Activated CD4-positive, alpha-beta memory T cell treated with anti-CD3 and anti-CD28 coated beads for 36 hours (primary cell): ENCODE measurements at regions of chr5 and their contacts with region 1.

Region 1: DNA sequence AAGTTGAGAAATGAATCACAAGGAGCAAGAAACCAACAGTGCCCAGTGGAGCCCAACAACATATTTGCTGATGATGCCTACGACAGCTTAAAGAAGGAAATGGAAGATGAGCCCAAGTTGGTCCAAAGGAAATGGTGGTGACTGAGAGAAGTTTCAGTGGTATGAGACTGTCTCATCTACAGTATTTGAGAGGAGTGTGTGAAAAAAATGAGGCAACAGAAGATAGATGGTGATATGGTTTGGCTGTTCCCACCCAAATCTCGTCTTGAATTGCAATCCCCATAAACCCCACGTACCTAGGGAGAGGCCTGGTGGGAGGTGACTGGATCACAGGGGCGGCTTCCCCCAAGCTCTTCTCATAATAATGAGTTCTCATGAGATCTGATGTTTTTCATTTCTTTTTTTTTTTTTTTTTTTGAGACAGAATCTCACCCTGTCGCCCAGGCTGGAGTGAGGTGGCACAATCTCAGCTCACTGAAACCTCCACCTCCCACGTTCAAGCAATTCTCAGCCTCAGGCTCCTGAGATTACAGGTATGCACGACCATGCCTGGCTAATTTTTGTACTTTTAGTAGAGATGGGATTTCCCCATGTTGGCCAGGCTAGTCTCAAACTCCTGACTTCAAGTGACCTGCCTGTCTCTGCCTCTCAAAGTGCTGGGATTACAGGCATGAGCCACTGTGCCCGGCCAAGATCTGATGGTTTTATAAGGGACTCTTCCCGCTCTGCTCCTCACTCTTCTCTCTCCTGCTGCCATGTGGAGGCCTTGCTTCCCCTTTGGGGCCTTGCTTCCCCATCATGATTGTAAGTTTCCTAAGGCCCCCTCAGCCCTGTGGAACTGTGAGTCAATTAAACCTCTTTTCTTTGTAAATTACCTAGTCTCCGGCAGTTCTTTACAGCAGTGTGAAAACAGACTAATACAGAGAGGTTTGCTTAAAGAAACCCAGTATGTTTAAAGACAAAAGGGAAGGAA is 30.2 kb downstream of the EFCAB9 start:
- DNase-seq: peak; percentile 84
- H3K4me3 Mint-ChIP-seq: no peak overlapping the region
- H3K27ac Mint-ChIP-seq: peak overlapping the region; percentile 70
- H3K4me1 Mint-ChIP-seq: peaks cover 33% of the 10 kb centered on the region
- H3K27me3 Mint-ChIP-seq: peaks cover 4% of the 10 kb centered on the region

Region 2: GRCh38 chr5:171961117-171961516 is 263.1 kb before region 1 on chr5:
- CTCF ChIA-PET with region 1: no interaction called
- POLR2A ChIA-PET with region 1: interaction called, 4 read pairs
- intact Hi-C with region 1: loop called (anchors 1 kb)
- DNase-seq: peak; percentile 59
- H3K4me3 Mint-ChIP-seq: no peak overlapping the region
- H3K27ac Mint-ChIP-seq: peak overlapping the region; percentile 53
- H3K4me1 Mint-ChIP-seq: peaks cover 87% of the 10 kb centered on the region
- H3K27me3 Mint-ChIP-seq: no peaks in the 10 kb centered on the region

Region 3: GRCh38 chr5:172065501-172065990 is 158.6 kb before region 1 on chr5:
- CTCF ChIA-PET with region 1: interaction called, 3 read pairs
- POLR2A ChIA-PET with region 1: interaction called, 4 read pairs
- intact Hi-C with region 1: loop called (anchors 2 kb)
- DNase-seq: no peak
- H3K4me3 Mint-ChIP-seq: no peak overlapping the region
- H3K27ac Mint-ChIP-seq: no peak overlapping the region
- H3K4me1 Mint-ChIP-seq: peaks cover 50% of the 10 kb centered on the region
- H3K27me3 Mint-ChIP-seq: no peaks in the 10 kb centered on the region

Region 4: GRCh38 chr5:172235132-172235780 is 11.1 kb after region 1 on chr5:
- CTCF ChIA-PET with region 1: no interaction called
- POLR2A ChIA-PET with region 1: no interaction called
- intact Hi-C with region 1: loop called (anchors 1 kb)
- DNase-seq: no peak
- H3K4me3 Mint-ChIP-seq: no peak overlapping the region
- H3K27ac Mint-ChIP-seq: no peak overlapping the region
- H3K4me1 Mint-ChIP-seq: peaks cover 44% of the 10 kb centered on the region
- H3K27me3 Mint-ChIP-seq: no peaks in the 10 kb centered on the region

Region 5: DNA sequence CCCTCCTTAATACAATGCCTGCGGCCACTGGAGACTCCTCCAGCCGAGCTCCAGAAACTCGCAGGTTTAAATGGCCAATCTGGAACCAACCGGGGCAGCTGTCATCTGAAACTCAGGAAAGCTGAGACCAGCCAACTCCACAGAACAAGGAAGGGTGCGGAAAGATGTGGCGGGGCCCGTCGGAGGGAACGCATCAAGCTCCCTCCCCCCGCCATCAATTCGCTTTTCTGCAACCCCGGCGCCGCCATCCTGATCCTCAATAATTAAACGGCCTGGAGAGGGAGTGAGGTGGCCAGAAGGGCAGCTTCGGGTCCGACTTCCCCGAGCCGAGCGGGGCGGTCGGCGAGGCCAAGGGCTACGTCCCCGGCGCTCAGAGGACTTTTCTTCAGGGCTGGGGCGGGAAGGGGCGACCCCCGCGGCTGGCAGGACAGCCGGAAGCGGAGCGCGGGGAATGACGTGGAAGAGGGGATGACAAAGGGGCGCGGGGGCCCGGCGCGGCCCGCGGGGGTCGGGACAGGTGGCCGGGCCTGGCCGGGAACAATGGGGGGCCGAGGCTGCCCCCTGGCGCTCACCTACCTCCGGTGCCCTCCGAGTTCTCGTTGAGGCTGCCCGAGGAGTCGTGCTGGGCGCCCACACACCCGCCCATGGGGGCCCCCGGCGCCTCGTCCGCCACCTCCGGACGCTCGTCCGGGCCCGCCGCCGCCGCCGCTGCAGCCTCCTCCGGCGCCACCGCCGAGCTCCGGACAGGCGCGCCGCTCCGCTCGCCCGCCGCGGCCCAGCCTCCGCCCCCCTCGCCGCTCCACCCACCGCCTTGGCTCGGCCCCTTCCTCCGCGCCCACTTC is 59.1 kb after region 1 on chr5 and contains the start of gene UBTD2:
- CTCF ChIA-PET with region 1: interaction called, 3 read pairs
- POLR2A ChIA-PET with region 1: interaction called, 4 read pairs
- intact Hi-C with region 1: loop called (anchors 2 kb)
- DNase-seq: peak; percentile 83
- H3K4me3 Mint-ChIP-seq: peak within 1 kb of the TSS; percentile 79
- H3K27ac Mint-ChIP-seq: no peak within 1 kb of the TSS
- H3K4me1 Mint-ChIP-seq: peaks cover 26% of the 10 kb centered on the region
- H3K27me3 Mint-ChIP-seq: no peaks in the 10 kb centered on the region
- total RNA-seq, gene UBTD2: 4.6 to 4.9 TPM